ENCODE measurements at regions of chr19 and their contacts with region 1.

Region 1: GRCh38 chr19:54189735-54190502 is 539 bp upstream of the MBOAT7 start:
- DNase-seq: peak; percentile 100
- H3K4me3 ChIP-seq: peak overlapping the region; percentile 57 to 76
- H3K4me3 Mint-ChIP-seq: peak overlapping the region; percentile 90 to 99 (median 96)
- H3K27ac ChIP-seq: peak overlapping the region; percentile 99
- H3K27ac Mint-ChIP-seq: peak overlapping the region; percentile 94 to 100 (median 99)
- H3K4me1 ChIP-seq: peaks cover 30% of the 10 kb centered on the region
- H3K4me1 Mint-ChIP-seq: peaks cover 15 to 54% (median 32%) of the 10 kb centered on the region in 4 donors
- H3K27me3 ChIP-seq: no peaks in the 10 kb centered on the region
- H3K27me3 Mint-ChIP-seq: no peaks in the 10 kb centered on the region

Region 2: DNA sequence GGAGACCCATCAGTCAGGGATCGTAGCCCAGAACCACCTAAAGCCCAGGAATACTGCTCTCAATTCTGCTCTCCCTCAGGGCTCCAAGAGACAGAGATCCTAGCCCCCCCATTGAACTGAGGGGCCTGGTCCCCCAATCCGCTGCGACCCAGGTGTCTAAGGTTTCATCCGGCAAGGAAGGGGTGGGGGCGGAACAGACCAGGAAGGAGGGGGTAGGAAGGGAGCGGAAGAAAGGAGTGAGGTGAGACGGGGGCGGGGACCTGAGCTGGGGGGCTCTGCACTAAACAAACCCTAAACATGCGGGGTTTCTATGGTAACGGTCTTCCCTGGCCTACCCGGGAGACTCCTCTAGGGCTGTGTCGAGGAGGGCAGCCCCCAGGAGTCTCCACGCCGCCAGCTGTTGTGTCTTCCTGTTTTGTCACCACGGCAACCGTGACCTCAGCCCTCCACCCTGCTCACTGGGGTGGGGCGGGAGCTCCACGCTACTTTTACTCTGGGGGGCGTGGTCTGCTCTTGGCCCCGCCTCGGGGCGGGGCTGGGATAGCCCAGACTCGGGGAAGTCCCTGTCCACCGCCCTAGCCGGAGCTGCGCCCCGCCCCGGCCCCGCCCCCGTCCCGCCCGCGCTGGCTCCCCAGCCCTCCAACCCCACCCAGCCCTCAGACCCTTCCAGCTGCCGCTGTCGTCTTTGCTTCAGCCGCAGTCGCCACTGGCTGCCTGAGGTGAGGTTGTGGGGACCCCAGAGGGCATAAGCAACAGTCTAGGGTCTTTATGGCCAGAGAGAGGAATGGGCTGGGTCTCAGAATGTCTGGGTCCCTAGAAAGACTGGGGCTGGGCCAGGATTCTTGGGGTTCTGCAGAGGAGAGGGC is 322.5 kb before region 1 on chr19 and contains the start of gene MYADM:
- CTCF ChIA-PET with region 1: no interaction called
- POLR2A ChIA-PET with region 1: interaction called, 11 read pairs
- intact Hi-C with region 1: loop called (anchors 1 kb)
- DNase-seq: peak; percentile 100
- H3K4me3 ChIP-seq: peak within 1 kb of the TSS; percentile 85 to 90
- H3K4me3 Mint-ChIP-seq: peak within 1 kb of the TSS; percentile 95 to 99 (median 98)
- H3K27ac ChIP-seq: peak within 1 kb of the TSS; percentile 100
- H3K27ac Mint-ChIP-seq: peak within 1 kb of the TSS; percentile 99 to 100 (median 100)
- H3K4me1 ChIP-seq: peaks cover 30% of the 10 kb centered on the region
- H3K4me1 Mint-ChIP-seq: peaks cover 20 to 60% (median 28%) of the 10 kb centered on the region in 4 donors
- H3K27me3 ChIP-seq: no peaks in the 10 kb centered on the region
- H3K27me3 Mint-ChIP-seq: no peaks in the 10 kb centered on the region
- total RNA-seq, gene MYADM: 42.1 to 45.8 TPM

Region 3: GRCh38 chr19:54159352-54160181 is 30.4 kb before region 1 on chr19 and contains the start of gene LENG1:
- CTCF ChIA-PET with region 1: interaction called, 10 read pairs
- POLR2A ChIA-PET with region 1: interaction called, 95 read pairs
- intact Hi-C with region 1: loop called (anchors 1 kb)
- DNase-seq: peak; percentile 97 to 100 (median 100)
- H3K4me3 ChIP-seq: peak within 1 kb of the TSS; percentile 61 to 99
- H3K4me3 Mint-ChIP-seq: peak within 1 kb of the TSS; percentile 99 to 100 (median 100)
- H3K27ac ChIP-seq: peak within 1 kb of the TSS; percentile 78
- H3K27ac Mint-ChIP-seq: peak within 1 kb of the TSS; percentile 93 to 100 (median 100)
- H3K4me1 ChIP-seq: peaks cover 75% of the 10 kb centered on the region
- H3K4me1 Mint-ChIP-seq: peaks cover 39 to 85% (median 58%) of the 10 kb centered on the region in 4 donors
- H3K27me3 ChIP-seq: no peaks in the 10 kb centered on the region
- H3K27me3 Mint-ChIP-seq: no peaks in the 10 kb centered on the region
- total RNA-seq, gene LENG1: 19.6 to 22.7 TPM

Region 4: DNA sequence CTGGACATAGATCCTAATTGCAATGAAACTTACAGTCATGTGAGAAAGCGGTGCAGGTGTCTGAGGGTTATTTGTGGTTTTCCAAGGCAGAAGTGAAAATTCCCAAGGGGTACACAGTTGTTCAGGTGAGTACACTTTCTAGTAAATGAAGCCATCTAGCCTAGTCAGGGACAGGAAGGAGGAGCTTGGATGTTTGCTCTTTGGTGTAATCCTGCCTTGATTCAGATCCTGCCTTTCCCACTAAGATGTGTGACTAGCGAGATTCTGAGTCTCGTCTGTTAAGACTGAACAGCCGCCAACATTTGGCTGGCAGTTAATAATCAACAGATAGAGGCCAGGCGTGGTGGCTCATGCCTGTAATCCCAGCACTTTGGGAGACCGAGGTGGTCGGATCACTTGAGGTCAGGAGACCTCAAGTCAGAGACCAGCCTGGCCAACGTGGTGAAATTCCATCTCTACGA is 13.3 kb after region 1 on chr19:
- CTCF ChIA-PET with region 1: interaction called, 56 read pairs
- POLR2A ChIA-PET with region 1: interaction called, 256 read pairs
- intact Hi-C with region 1: loop called (anchors 1 kb)
- DNase-seq: no peak
- H3K4me3 ChIP-seq: no peak overlapping the region
- H3K4me3 Mint-ChIP-seq: peak overlapping the region; percentile 10 to 100 (median 64)
- H3K27ac ChIP-seq: peak overlapping the region; percentile 89
- H3K27ac Mint-ChIP-seq: peak overlapping the region in 6 of 7 donors; percentile 66 to 99 (median 85)
- H3K4me1 ChIP-seq: peaks cover 74% of the 10 kb centered on the region
- H3K4me1 Mint-ChIP-seq: peaks cover 44 to 86% (median 62%) of the 10 kb centered on the region in 4 donors
- H3K27me3 ChIP-seq: no peaks in the 10 kb centered on the region
- H3K27me3 Mint-ChIP-seq: no peaks in the 10 kb centered on the region

Region 5: GRCh38 chr19:54231077-54231931 is 41.4 kb after region 1 on chr19:
- CTCF ChIA-PET with region 1: interaction called, 3 read pairs
- POLR2A ChIA-PET with region 1: no interaction called
- intact Hi-C with region 1: loop called (anchors 1 kb)
- DNase-seq: peak; percentile 59 to 83 (median 75)
- H3K4me3 ChIP-seq: no peak overlapping the region
- H3K4me3 Mint-ChIP-seq: peak overlapping the region in 1 of 8 donors; percentile 41
- H3K27ac ChIP-seq: no peak overlapping the region
- H3K27ac Mint-ChIP-seq: no peak overlapping the region
- H3K4me1 ChIP-seq: peaks cover 6% of the 10 kb centered on the region
- H3K4me1 Mint-ChIP-seq: peaks cover 0 to 7% (median 3%) of the 10 kb centered on the region in 4 donors
- H3K27me3 ChIP-seq: no peaks in the 10 kb centered on the region
- H3K27me3 Mint-ChIP-seq: peaks cover 18 to 21% of the 10 kb centered on the region in 2 donors

Region 6: GRCh38 chr19:54463531-54464043 is 273.7 kb after region 1 on chr19 and contains the start of gene LENG9:
- CTCF ChIA-PET with region 1: no interaction called
- POLR2A ChIA-PET with region 1: no interaction called
- intact Hi-C with region 1: loop called (anchors 1 kb)
- DNase-seq: peak; percentile 86 to 99 (median 91)
- H3K4me3 ChIP-seq: peak within 1 kb of the TSS; percentile 65 to 85
- H3K4me3 Mint-ChIP-seq: peak within 1 kb of the TSS; percentile 84 to 92 (median 89)
- H3K27ac ChIP-seq: peak within 1 kb of the TSS; percentile 81
- H3K27ac Mint-ChIP-seq: peak within 1 kb of the TSS; percentile 92 to 99 (median 95)
- H3K4me1 ChIP-seq: peaks cover 27% of the 10 kb centered on the region
- H3K4me1 Mint-ChIP-seq: peaks cover 15 to 37% (median 27%) of the 10 kb centered on the region in 4 donors
- H3K27me3 ChIP-seq: no peaks in the 10 kb centered on the region
- H3K27me3 Mint-ChIP-seq: peaks cover 0 to 2% of the 10 kb centered on the region in 2 donors
- total RNA-seq, gene LENG9: 7.2 to 7.3 TPM

Region 7: GRCh38 chr19:54576411-54576976 is 386.6 kb after region 1 on chr19:
- CTCF ChIA-PET with region 1: no interaction called
- POLR2A ChIA-PET with region 1: no interaction called
- intact Hi-C with region 1: no loop called
- DNase-seq: no peak
- H3K4me3 ChIP-seq: no peak overlapping the region
- H3K4me3 Mint-ChIP-seq: no peak overlapping the region
- H3K27ac ChIP-seq: no peak overlapping the region
- H3K27ac Mint-ChIP-seq: no peak overlapping the region
- H3K4me1 ChIP-seq: no peaks in the 10 kb centered on the region
- H3K4me1 Mint-ChIP-seq: no peaks in the 10 kb centered on the region
- H3K27me3 ChIP-seq: peaks cover 3% of the 10 kb centered on the region
- H3K27me3 Mint-ChIP-seq: peaks cover 12 to 21% of the 10 kb centered on the region in 2 donors

Measured in CD4-positive, alpha-beta memory T cell (primary cell).